Cardiac septum (tissue), 1 donor: ENCODE measurements at regions of chr15 and their contacts with region 1.

Region 1: DNA sequence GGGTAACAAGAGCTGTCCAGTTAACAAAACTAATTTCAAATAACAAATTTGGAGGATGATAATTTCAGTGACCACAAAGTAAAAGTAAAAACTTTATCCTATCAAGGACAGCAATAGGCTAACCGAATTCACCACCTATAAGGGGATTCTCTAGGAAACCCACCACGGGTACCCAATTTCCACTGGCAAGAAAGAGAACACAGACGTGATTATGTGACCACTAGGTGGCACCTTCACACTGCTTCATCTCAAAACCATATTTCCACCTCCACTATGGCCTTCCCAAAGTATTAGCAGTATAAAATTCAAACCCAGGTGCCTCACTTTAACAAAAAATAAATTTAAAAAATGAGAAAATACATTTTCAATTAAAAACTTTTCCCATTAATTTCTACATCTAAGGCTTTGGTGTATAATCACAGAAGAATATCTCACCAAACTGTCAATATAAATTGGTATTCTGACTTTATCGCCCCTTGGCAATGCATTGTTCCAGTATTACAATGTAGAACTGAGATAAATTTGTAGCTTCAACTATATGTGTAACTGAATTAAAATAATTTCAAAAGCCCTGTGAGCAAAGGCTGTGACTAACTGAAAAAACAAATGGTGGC is 96.5 kb downstream of the FSIP1 start:
- DNase-seq: no peak

Region 2: DNA sequence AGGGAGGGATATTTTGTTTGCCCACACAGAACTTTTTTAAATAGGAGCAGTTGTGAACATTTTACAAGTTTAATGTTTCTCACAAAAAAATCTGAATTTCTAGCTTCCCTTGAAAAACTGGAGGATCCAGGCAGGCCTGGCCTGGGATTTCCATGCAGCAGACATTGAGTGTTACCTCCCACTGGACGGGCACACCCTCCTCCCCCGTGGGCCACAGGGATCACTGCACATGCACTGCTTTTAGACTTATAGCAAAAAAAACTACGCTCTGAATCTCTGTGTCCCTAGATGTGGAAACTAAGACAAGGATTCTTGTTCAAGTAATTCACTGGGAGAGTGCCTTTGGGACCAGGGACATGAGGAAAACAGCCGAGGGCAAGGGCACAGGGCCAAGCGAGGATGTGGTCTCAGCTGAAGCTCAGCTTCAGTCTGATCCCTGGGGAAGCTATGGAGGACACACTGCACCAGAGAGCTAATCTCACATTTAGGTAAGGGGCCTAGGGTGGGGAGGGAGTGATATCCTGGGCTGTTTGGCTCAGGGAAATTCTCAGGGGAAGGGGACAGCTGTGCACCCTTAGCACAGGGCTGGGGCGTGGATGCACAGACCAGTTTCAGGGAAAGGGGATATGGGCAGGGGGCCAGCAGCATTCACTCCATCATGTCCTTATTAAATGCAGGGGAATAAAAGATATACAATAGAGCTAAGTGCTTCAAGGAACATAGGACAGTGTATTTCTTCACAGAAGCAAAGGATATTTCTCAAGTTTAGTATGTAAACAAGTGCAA is 50.5 kb after region 1 on chr15:
- intact Hi-C with region 1: no loop called
- DNase-seq: no peak

Region 3: GRCh38 chr15:39976291-39977274 is 290.5 kb after region 1 on chr15:
- intact Hi-C with region 1: loop called (anchors 5 kb)
- DNase-seq: peak; percentile 82